Sigmoid colon (tissue), 7 donors: ENCODE measurements at regions of chr9 and their contacts with region 1.

Region 1: DNA sequence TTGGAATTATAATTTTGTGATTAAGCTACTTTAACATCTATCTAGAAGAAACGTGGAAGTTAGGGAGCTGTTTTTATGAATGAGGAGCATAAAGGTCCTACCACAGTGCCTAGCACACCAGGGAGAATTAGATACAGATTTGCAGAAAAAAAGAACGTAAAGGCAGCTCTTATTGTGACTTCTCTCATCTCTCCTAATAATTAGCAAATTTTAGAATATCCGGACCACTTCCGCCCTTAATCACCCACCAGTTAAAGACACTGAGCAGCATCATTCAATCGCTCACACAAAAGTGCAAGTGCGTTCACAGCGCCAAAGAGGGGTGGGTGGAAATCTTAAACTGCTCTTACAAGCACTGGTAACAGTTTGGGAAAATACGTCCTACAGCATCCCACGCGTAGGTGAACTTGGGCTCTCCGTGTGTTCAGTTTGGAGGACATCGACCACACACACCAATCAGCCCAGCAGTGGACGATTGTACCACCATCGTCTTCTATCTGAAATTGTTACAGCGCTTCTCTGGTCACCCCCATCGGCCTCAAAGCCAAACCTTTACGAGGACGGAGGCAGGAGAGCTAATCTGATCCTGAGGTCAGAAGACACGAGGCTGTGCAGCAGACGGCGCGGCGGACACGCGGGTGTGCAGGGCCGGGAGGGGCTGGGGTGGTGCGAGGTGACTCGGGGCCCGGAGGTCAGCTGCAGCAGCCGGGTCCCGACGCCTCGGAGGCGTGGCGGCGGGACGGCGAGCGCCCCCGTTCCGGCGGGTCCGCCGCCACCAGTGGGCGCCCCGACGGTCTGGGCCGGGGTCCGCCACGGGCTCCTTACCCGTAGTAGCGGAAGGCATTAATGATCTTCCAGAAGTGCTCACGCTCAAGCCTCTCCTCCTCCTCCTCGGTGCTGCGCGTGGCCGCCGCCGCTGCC is 646 bp downstream of the CARNMT1 start:
- DNase-seq: peak; percentile 86
- H3K4me3 ChIP-seq: peak overlapping the region; percentile 52 to 91 (median 71)
- H3K27ac ChIP-seq: peak overlapping the region; percentile 93 to 97 (median 94)
- H3K4me1 ChIP-seq: peaks cover 0 to 27% (median 14%) of the 10 kb centered on the region in 4 donors
- H3K27me3 ChIP-seq: no peaks in the 10 kb centered on the region
- CTCF ChIP-seq: peak in 1 of 4 experiments; percentile 14
- EP300 ChIP-seq: no peak
- POLR2A ChIP-seq: no peak

Region 2: DNA sequence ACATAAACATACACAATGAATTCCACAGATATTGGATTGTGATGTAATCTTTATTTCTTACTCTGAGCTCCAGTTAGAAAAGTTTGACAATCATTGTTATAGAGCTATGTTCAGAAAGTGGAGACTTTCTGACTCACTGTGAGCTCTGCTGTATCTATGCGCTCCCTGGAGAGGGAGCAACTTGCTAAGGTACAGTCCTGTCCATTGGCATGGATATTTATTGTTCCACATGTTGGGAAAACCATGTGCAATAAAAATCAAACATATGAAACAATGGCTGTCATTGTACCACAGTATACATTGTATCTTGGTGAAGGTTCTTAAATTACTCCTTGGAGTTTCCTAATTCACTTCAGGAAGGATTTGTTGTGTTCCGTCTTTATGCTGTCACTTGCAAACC is 33.7 kb after region 1 on chr9:
- intact Hi-C with region 1: no loop called
- DNase-seq: no peak
- H3K4me3 ChIP-seq: no peak overlapping the region
- H3K27ac ChIP-seq: no peak overlapping the region
- H3K4me1 ChIP-seq: peaks cover 0 to 12% (median 11%) of the 10 kb centered on the region in 4 donors
- H3K27me3 ChIP-seq: no peaks in the 10 kb centered on the region
- CTCF ChIP-seq: no peak
- EP300 ChIP-seq: no peak
- POLR2A ChIP-seq: no peak

Region 3: GRCh38 chr9:75071530-75072124 is 44.2 kb after region 1 on chr9:
- intact Hi-C with region 1: loop called (anchors 2 kb)
- DNase-seq: no peak
- H3K4me3 ChIP-seq: no peak overlapping the region
- H3K27ac ChIP-seq: no peak overlapping the region
- H3K4me1 ChIP-seq: no peaks in the 10 kb centered on the region
- H3K27me3 ChIP-seq: no peaks in the 10 kb centered on the region
- CTCF ChIP-seq: no peak
- EP300 ChIP-seq: no peak
- POLR2A ChIP-seq: no peak

Region 4: DNA sequence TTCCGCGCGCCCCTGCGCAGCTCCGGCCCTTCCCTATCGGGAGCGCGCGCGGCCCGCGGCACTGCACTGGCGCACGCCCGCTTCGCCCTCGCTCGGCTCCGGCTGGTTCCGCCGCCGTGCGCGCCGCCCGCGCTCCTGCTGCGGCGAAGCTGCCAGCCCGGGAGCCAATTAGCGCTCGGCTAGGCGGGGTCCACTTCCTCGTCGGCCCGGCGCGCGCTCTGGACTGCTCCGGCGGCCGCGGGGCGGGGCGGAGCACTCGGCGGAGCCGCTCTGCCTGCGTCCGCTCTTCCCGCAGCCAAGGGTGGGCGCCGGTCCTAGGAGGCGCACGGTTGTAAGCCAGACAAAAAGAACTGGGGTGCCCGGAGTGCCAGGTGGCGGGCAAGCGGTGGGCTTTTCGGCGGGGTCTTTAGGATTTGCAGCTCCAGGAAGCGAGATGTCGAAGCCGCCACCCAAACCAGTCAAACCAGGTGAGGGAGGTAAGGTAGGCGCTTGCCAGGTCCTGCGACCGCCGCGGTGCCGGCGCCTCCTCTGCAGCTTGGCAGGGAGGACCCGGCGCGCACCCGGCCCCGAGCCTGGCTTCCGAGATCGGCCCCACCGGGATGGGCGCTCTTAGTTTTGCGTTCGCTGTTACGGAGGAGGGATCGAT is 60.9 kb after region 1 on chr9 and contains the start of gene OSTF1:
- intact Hi-C with region 1: loop called (anchors 2 kb)
- DNase-seq: peak; percentile 97
- H3K4me3 ChIP-seq: peak within 1 kb of the TSS; percentile 87 to 97 (median 96)
- H3K27ac ChIP-seq: peak within 1 kb of the TSS; percentile 92 to 98 (median 94)
- H3K4me1 ChIP-seq: peaks cover 0 to 18% (median 5%) of the 10 kb centered on the region in 4 donors
- H3K27me3 ChIP-seq: no peaks in the 10 kb centered on the region
- CTCF ChIP-seq: no peak
- EP300 ChIP-seq: no peak
- POLR2A ChIP-seq: peak; percentile 88 to 89
- total RNA-seq, gene OSTF1: 11.0 to 20.7 (median 17.2) TPM

Region 5: GRCh38 chr9:75108555-75108954 is 81.1 kb after region 1 on chr9:
- intact Hi-C with region 1: no loop called
- DNase-seq: peak; percentile 75
- H3K4me3 ChIP-seq: no peak overlapping the region
- H3K27ac ChIP-seq: peak overlapping the region in 2 of 4 donors; percentile 24 to 25
- H3K4me1 ChIP-seq: peaks cover 0 to 5% (median 0%) of the 10 kb centered on the region in 4 donors
- H3K27me3 ChIP-seq: no peaks in the 10 kb centered on the region
- CTCF ChIP-seq: no peak
- EP300 ChIP-seq: no peak
- POLR2A ChIP-seq: no peak

Region 6: GRCh38 chr9:75429531-75430475 is 402.4 kb after region 1 on chr9:
- intact Hi-C with region 1: no loop called
- DNase-seq: no peak
- H3K4me3 ChIP-seq: no peak overlapping the region
- H3K27ac ChIP-seq: peak overlapping the region in 1 of 4 donors; percentile 38
- H3K4me1 ChIP-seq: no peaks in the 10 kb centered on the region
- H3K27me3 ChIP-seq: no peaks in the 10 kb centered on the region
- CTCF ChIP-seq: no peak
- EP300 ChIP-seq: no peak
- POLR2A ChIP-seq: no peak